CD8-positive, alpha-beta T cell (primary cell): ENCODE measurements at regions of chr2 and their contacts with region 1.

Region 1: GRCh38 chr2:233251306-233252116 is at the start of gene ATG16L1:
- DNase-seq: peak; percentile 89 to 98 (median 95)
- ATAC-seq: peak; percentile 94
- H3K4me3 ChIP-seq: peak within 1 kb of the TSS; percentile 85 to 92
- H3K4me3 Mint-ChIP-seq: peak within 1 kb of the TSS; percentile 90
- H3K27ac ChIP-seq: peak within 1 kb of the TSS; percentile 82 to 97
- H3K27ac Mint-ChIP-seq: peak within 1 kb of the TSS; percentile 96
- H3K4me1 ChIP-seq: peaks cover 59% of the 10 kb centered on the region
- H3K4me1 Mint-ChIP-seq: peaks cover 71% of the 10 kb centered on the region
- H3K27me3 ChIP-seq: no peaks in the 10 kb centered on the region
- H3K27me3 Mint-ChIP-seq: no peaks in the 10 kb centered on the region
- CTCF ChIP-seq: peak; percentile 93
- total RNA-seq, gene ATG16L1: 156 to 164 TPM

Region 2: DNA sequence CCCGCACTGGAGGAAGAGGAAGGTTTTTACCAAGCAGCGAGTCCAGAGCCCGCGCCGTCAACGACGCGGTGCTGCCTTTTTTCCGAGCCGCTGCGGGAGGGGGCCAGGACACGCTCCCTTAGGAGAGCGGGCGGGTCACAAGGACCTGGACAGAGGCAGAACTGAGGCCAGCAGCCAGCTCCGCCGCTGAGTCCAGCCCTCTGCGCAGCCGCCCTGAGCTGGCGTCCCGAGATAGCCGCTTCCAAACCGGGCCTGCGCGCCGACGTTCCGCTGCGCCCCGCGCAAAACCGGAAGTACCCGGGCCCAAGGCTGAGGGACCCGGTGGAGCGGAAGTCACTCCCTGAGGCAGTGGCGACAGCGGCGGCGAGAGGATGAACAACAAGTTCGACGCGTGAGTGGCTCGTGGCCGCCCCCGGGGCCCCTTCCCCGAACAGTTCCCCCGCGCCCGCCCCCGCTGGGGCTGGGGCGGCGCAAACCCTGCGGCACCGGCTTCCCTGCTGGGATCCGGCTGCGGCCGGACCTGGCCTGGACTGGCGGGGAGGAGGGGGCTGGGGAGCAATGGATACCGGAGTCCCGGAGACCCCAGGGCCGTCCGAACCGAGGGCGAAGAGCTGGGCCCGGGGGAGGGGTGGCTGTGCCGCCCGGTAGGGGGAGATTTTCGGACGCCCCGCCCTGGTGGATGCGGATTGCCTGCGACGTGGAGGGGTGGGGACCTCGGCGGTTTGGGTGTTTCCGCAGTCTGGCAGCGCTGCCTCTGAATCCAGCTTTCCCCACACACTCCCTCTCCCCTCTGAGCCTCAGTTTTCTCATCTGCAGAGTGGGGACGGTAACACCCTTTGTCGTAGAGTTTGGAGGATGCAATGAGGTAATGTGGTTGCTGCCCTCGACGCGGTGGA is 700.9 kb before region 1 on chr2 and contains the starts of genes EIF4E2 and TIGD1:
- CTCF ChIA-PET with region 1: no interaction called
- POLR2A ChIA-PET with region 1: interaction called, 4 read pairs
- intact Hi-C with region 1: loop called in 1 of 2 experiments (anchors 5 kb)
- DNase-seq: peak; percentile 78 to 94 (median 91)
- ATAC-seq: peak; percentile 82
- H3K4me3 ChIP-seq: peak within 1 kb of the TSS; percentile 74 to 91
- H3K4me3 Mint-ChIP-seq: peak within 1 kb of the TSS; percentile 100
- H3K27ac ChIP-seq: peak within 1 kb of the TSS; percentile 86 to 88
- H3K27ac Mint-ChIP-seq: peak within 1 kb of the TSS; percentile 100
- H3K4me1 ChIP-seq: peaks cover 28% of the 10 kb centered on the region
- H3K4me1 Mint-ChIP-seq: peaks cover 80% of the 10 kb centered on the region
- H3K27me3 ChIP-seq: no peaks in the 10 kb centered on the region
- H3K27me3 Mint-ChIP-seq: no peaks in the 10 kb centered on the region
- CTCF ChIP-seq: peak; percentile 55
- total RNA-seq, gene EIF4E2: 53.8 to 55.2 TPM
- total RNA-seq, gene TIGD1: 16.5 to 17.2 TPM

Region 3: GRCh38 chr2:232838406-232838874 is 413.1 kb before region 1 on chr2:
- CTCF ChIA-PET with region 1: no interaction called
- POLR2A ChIA-PET with region 1: no interaction called
- intact Hi-C with region 1: loop called in 1 of 2 experiments (anchors 5 kb)
- DNase-seq: peak; percentile 15 to 70 (median 59)
- ATAC-seq: peak; percentile 85
- H3K4me3 ChIP-seq: no peak overlapping the region
- H3K4me3 Mint-ChIP-seq: peak overlapping the region; percentile 2
- H3K27ac ChIP-seq: peak overlapping the region; percentile 19 to 72
- H3K27ac Mint-ChIP-seq: peak overlapping the region; percentile 66
- H3K4me1 ChIP-seq: peaks cover 20% of the 10 kb centered on the region
- H3K4me1 Mint-ChIP-seq: peaks cover 32% of the 10 kb centered on the region
- H3K27me3 ChIP-seq: no peaks in the 10 kb centered on the region
- H3K27me3 Mint-ChIP-seq: no peaks in the 10 kb centered on the region
- CTCF ChIP-seq: no peak

Region 4: GRCh38 chr2:233084488-233084887 is 167.0 kb before region 1 on chr2:
- CTCF ChIA-PET with region 1: interaction called, 4 read pairs
- POLR2A ChIA-PET with region 1: interaction called, 4 read pairs
- intact Hi-C with region 1: loop called in 1 of 2 experiments (anchors 2 kb)
- DNase-seq: peak in 6 of 9 experiments; percentile 54 to 81 (median 66)
- ATAC-seq: peak; percentile 44
- H3K4me3 ChIP-seq: peak overlapping the region; percentile 13 to 16
- H3K4me3 Mint-ChIP-seq: peak overlapping the region; percentile 76
- H3K27ac ChIP-seq: peak overlapping the region; percentile 56 to 92
- H3K27ac Mint-ChIP-seq: peak overlapping the region; percentile 91
- H3K4me1 ChIP-seq: peaks cover 72% of the 10 kb centered on the region
- H3K4me1 Mint-ChIP-seq: peaks cover 85% of the 10 kb centered on the region
- H3K27me3 ChIP-seq: no peaks in the 10 kb centered on the region
- H3K27me3 Mint-ChIP-seq: no peaks in the 10 kb centered on the region
- CTCF ChIP-seq: no peak

Region 5: DNA sequence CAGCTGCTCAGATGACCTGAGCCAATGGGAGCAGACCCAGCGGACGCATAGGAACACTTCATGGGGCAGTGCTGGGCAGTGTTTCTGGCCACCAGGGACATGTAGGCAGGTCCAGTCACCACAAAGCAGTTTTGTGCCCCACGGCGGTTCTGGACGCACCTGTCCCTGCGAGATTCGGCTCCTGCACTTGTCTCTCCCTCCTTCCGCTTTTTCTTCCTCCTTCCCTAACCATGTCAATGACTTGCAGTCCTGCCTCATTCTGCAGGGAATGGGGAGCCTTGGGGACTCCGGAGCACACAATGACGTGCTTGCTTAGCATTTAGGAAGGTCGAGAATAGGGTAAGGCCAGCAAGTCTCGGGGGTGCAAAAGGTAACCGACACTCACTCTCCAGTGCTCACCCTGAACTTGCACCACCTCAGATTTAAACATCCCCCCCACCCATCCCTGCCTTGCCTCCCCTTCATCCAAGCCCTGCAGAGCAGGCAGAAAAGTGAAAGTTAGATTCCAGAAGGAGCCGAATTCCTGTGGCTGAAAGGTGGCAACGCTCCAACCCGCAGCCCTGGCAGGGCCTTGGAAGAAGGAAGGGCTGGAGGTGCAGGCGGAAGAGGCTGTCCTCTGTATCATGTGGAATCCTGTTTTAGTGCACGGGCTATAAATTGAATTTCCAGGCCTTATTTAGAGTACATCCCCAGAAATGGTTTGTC is 40.5 kb before region 1 on chr2:
- CTCF ChIA-PET with region 1: interaction called, 6 read pairs
- POLR2A ChIA-PET with region 1: no interaction called
- intact Hi-C with region 1: loop called in 1 of 2 experiments (anchors 5 kb)
- DNase-seq: no peak
- ATAC-seq: no peak
- H3K4me3 ChIP-seq: no peak overlapping the region
- H3K4me3 Mint-ChIP-seq: no peak overlapping the region
- H3K27ac ChIP-seq: no peak overlapping the region
- H3K27ac Mint-ChIP-seq: no peak overlapping the region
- H3K4me1 ChIP-seq: peaks cover 4% of the 10 kb centered on the region
- H3K4me1 Mint-ChIP-seq: peaks cover 13% of the 10 kb centered on the region
- H3K27me3 ChIP-seq: no peaks in the 10 kb centered on the region
- H3K27me3 Mint-ChIP-seq: no peaks in the 10 kb centered on the region
- CTCF ChIP-seq: no peak

Region 6: DNA sequence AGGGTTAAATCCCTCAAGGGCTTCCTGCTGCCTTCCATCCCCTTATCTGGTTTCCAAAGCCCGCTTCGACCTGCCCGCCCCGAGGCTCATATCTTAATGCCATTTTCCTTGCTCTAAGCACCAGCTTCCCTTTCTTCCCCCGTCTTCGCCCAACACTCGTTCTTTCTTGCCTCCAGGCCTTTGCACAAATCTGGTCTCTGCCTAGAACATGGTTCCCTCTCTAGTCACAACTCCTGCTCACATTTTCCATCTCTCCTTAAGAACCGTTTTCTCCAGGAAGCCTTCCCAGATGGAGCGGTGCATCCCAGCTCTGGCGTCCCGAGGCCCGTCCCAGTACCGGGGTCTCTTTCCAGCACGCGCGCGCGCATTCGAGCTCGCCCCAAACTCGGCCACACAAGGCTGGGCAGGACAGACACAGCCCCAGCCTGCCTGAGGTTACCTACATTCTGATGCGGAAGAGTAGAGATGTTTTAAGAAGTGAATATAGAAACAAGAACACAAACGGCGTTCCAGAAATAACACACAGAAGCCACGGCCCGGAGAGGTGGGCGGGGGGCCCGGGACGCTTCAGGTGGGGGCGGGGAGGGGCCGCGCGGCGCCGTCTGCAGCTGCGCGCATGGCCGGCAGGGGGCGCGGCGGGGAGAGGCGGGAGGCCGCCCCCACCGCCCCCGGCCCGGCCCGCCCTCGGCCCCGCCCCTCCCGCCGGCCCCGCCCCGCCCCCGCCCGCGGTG is 102.4 kb after region 1 on chr2 and contains the start of gene DGKD:
- CTCF ChIA-PET with region 1: interaction called, 3 read pairs
- POLR2A ChIA-PET with region 1: interaction called, 5 read pairs
- intact Hi-C with region 1: loop called in 1 of 2 experiments (anchors 1 kb)
- DNase-seq: peak; percentile 63 to 86 (median 77)
- ATAC-seq: peak; percentile 90
- H3K4me3 ChIP-seq: peak within 1 kb of the TSS; percentile 83 to 87
- H3K4me3 Mint-ChIP-seq: peak within 1 kb of the TSS; percentile 92
- H3K27ac ChIP-seq: peak within 1 kb of the TSS; percentile 34 to 44
- H3K27ac Mint-ChIP-seq: peak within 1 kb of the TSS; percentile 89
- H3K4me1 ChIP-seq: peaks cover 53% of the 10 kb centered on the region
- H3K4me1 Mint-ChIP-seq: peaks cover 71% of the 10 kb centered on the region
- H3K27me3 ChIP-seq: no peaks in the 10 kb centered on the region
- H3K27me3 Mint-ChIP-seq: no peaks in the 10 kb centered on the region
- CTCF ChIP-seq: no peak
- total RNA-seq, gene DGKD: 209 to 244 TPM